ENCODE measurements at regions of chr10 and their contacts with region 1.

Region 1: GRCh38 chr10:109883859-109884771 is 39.2 kb downstream of the XPNPEP1 start:
- DNase-seq: no peak
- ATAC-seq: peak; percentile 87
- H3K4me3 ChIP-seq: no peak overlapping the region
- H3K27ac ChIP-seq: no peak overlapping the region
- H3K4me1 ChIP-seq: peaks cover 15% of the 10 kb centered on the region
- H3K27me3 ChIP-seq: no peaks in the 10 kb centered on the region
- CTCF ChIP-seq: peak; percentile 93 to 95 (median 94); a peak in 5 of 6 replicates
- EP300 ChIP-seq: no peak
- POLR2A ChIP-seq: no peak
- RAD21 ChIP-seq: peak; percentile 96

Region 2: DNA sequence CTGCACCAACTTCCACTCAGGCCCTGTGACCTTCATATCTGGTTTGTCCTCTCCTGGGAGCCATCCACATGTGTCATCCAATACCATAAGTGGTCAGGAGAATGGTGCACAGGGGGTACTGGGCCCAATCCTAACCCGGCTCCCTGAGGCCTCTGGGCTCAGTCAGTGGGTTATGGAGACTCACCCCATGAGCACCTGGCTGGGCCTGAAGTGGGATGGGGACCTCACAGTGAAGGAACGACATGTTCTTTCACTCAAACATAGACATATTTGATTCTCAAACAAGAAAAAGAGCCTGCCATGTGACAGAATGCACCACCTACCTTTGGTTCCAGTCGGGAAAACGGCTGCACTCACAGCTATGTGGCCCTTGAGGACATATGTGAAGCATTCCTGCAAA is 12.6 kb before region 1 on chr10:
- CTCF ChIA-PET with region 1: interaction called, 10 read pairs
- POLR2A ChIA-PET with region 1: no interaction called
- RAD21 ChIA-PET with region 1: no interaction called
- SMC1A ChIA-PET with region 1: interaction called, 5 read pairs
- in situ Hi-C with region 1: no loop called
- intact Hi-C with region 1: no loop called
- DNase-seq: no peak
- ATAC-seq: no peak
- H3K4me3 ChIP-seq: no peak overlapping the region
- H3K27ac ChIP-seq: no peak overlapping the region
- H3K4me1 ChIP-seq: no peaks in the 10 kb centered on the region
- H3K27me3 ChIP-seq: no peaks in the 10 kb centered on the region
- CTCF ChIP-seq: no peak
- EP300 ChIP-seq: no peak
- POLR2A ChIP-seq: no peak
- RAD21 ChIP-seq: no peak

Region 3: DNA sequence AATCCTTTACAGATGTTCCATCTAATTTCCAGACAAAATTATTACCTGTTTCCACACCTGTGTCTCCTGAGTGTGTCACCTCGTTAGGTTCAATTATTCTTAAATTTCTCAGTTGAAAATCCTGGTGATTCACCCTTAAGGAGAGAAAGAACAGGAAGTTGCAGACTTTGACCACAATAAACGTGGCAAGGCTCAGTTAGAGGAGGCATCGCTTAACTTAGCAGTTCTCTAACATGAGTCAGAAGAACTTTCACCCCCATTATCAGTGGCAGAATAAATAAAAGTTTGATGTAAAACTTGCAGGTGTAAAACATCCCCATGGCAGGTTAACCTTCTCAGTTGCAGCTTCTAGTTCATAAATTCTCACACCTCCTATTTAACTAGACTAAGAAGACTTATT is 30.9 kb after region 1 on chr10:
- CTCF ChIA-PET with region 1: interaction called, 26 read pairs
- POLR2A ChIA-PET with region 1: interaction called, 3 read pairs
- RAD21 ChIA-PET with region 1: interaction called, 10 read pairs
- SMC1A ChIA-PET with region 1: interaction called, 30 read pairs
- in situ Hi-C with region 1: no loop called
- intact Hi-C with region 1: no loop called
- DNase-seq: peak; percentile 41
- ATAC-seq: peak; percentile 18; the same call in 2 of the 3 replicates
- H3K4me3 ChIP-seq: no peak overlapping the region
- H3K27ac ChIP-seq: peak overlapping the region; percentile 25; the same call in 1 of the 2 replicates
- H3K4me1 ChIP-seq: peaks cover 61% of the 10 kb centered on the region
- H3K27me3 ChIP-seq: no peaks in the 10 kb centered on the region
- CTCF ChIP-seq: no peak
- EP300 ChIP-seq: no peak
- POLR2A ChIP-seq: no peak
- RAD21 ChIP-seq: no peak

Region 4: GRCh38 chr10:109978481-109978880 is 94.4 kb after region 1 on chr10:
- CTCF ChIA-PET with region 1: interaction called, 65 read pairs
- POLR2A ChIA-PET with region 1: interaction called, 3 read pairs
- RAD21 ChIA-PET with region 1: interaction called, 14 read pairs
- SMC1A ChIA-PET with region 1: interaction called, 47 read pairs
- in situ Hi-C with region 1: no loop called
- intact Hi-C with region 1: loop called (anchors 1 kb)
- DNase-seq: no peak
- ATAC-seq: peak; percentile 77
- H3K4me3 ChIP-seq: no peak overlapping the region
- H3K27ac ChIP-seq: no peak overlapping the region
- H3K4me1 ChIP-seq: no peaks in the 10 kb centered on the region
- H3K27me3 ChIP-seq: peaks cover 0 to 2% of the 10 kb centered on the region in 2 experiments; a peak in 1 of 4 replicates
- CTCF ChIP-seq: peak; percentile 74 to 86 (median 81)
- EP300 ChIP-seq: no peak
- POLR2A ChIP-seq: no peak
- RAD21 ChIP-seq: peak; percentile 82

Region 5: GRCh38 chr10:110036640-110037039 is 152.5 kb after region 1 on chr10:
- CTCF ChIA-PET with region 1: interaction called, 14 read pairs
- POLR2A ChIA-PET with region 1: no interaction called
- RAD21 ChIA-PET with region 1: interaction called, 7 read pairs
- SMC1A ChIA-PET with region 1: interaction called, 6 read pairs
- in situ Hi-C with region 1: no loop called
- intact Hi-C with region 1: no loop called
- DNase-seq: peak; percentile 48
- ATAC-seq: peak; percentile 78
- H3K4me3 ChIP-seq: peak overlapping the region; percentile 20
- H3K27ac ChIP-seq: peak overlapping the region; percentile 42; the same call in 1 of the 2 replicates
- H3K4me1 ChIP-seq: peaks cover 16% of the 10 kb centered on the region
- H3K27me3 ChIP-seq: no peaks in the 10 kb centered on the region
- CTCF ChIP-seq: no peak
- EP300 ChIP-seq: 0 out of 4 replicates have a peak, but pooled peaks of 1 of the 2 experiments have one; percentile 17
- POLR2A ChIP-seq: no peak
- RAD21 ChIP-seq: no peak

Region 6: GRCh38 chr10:110225756-110226542 is 341.8 kb after region 1 on chr10:
- CTCF ChIA-PET with region 1: interaction called, 3 read pairs
- POLR2A ChIA-PET with region 1: no interaction called
- RAD21 ChIA-PET with region 1: interaction called, 3 read pairs
- SMC1A ChIA-PET with region 1: interaction called, 5 read pairs
- in situ Hi-C with region 1: no loop called
- intact Hi-C with region 1: loop called (anchors 10 kb)
- DNase-seq: no peak
- ATAC-seq: peak; percentile 92
- H3K4me3 ChIP-seq: peak overlapping the region; percentile 90
- H3K27ac ChIP-seq: no peak overlapping the region
- H3K4me1 ChIP-seq: peaks cover 3% of the 10 kb centered on the region; the same call in 1 of the 2 replicates
- H3K27me3 ChIP-seq: peaks cover 0 to 3% of the 10 kb centered on the region in 2 experiments; a peak in 2 of 4 replicates
- CTCF ChIP-seq: peak; percentile 58 to 74 (median 63)
- EP300 ChIP-seq: no peak
- POLR2A ChIP-seq: peak; percentile 63
- RAD21 ChIP-seq: peak; percentile 42

Measured in GM12878 (cell line).